Heart right ventricle (tissue), 16 donors: ENCODE measurements at regions of chr2 and their contacts with region 1.

Region 1: DNA sequence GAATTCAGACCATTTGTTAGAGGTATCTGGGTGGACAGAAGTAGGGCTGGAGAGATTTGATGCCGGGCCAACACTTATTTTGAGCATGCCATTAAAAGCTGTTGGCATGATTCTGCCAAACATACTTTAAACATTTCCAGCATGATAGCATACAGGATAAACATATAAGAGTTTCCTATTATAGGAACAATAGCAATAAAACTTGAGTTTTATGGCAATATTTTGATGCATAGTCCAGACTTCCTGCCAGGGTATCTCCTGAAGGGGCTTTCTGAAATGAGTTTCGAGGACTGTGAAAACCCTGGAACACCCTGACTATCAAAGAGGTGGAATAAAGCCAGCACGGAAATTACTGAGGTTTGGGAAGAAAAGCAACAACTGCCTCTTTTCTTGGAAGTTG is 1398.0 kb upstream of the NXPH2 start:
- DNase-seq: no peak
- ATAC-seq: peak in 4 of 8 donors; percentile 16 to 81 (median 54)
- H3K4me3 ChIP-seq: peak overlapping the region in 3 of 10 donors; percentile 4 to 35 (median 22)
- H3K27ac ChIP-seq: peak overlapping the region in 3 of 10 donors; percentile 53 to 75 (median 65)
- H3K4me1 ChIP-seq: no peaks in the 10 kb centered on the region
- H3K27me3 ChIP-seq: no peaks in the 10 kb centered on the region
- CTCF ChIP-seq: no peak

Region 2: GRCh38 chr2:139759000-139759505 is 419.2 kb before region 1 on chr2:
- intact Hi-C with region 1: no loop called
- DNase-seq: no peak
- ATAC-seq: no peak
- H3K4me3 ChIP-seq: no peak overlapping the region
- H3K27ac ChIP-seq: no peak overlapping the region
- H3K4me1 ChIP-seq: no peaks in the 10 kb centered on the region
- H3K27me3 ChIP-seq: no peaks in the 10 kb centered on the region
- CTCF ChIP-seq: no peak

Region 3: DNA sequence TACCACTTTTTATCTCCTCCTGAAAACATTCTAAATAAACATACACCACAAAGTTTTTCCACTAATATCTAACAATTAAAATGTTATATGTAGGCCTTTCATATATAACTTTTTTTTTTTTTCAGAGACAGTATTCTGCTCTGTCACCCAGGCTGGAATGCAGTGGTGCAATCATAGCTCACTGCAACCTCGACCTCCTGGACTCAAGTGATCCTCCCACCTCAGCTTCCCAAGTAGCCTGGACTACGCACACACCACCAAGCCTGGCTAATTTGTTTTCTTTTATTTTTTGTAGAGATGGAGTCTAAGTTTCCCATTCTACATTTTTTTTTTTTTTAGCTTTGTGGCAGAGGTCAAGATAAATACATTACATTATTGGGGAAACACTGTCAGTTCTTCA is 214.6 kb after region 1 on chr2:
- intact Hi-C with region 1: no loop called
- DNase-seq: no peak
- ATAC-seq: no peak
- H3K4me3 ChIP-seq: no peak overlapping the region
- H3K27ac ChIP-seq: no peak overlapping the region
- H3K4me1 ChIP-seq: no peaks in the 10 kb centered on the region
- H3K27me3 ChIP-seq: no peaks in the 10 kb centered on the region
- CTCF ChIP-seq: no peak

Region 4: GRCh38 chr2:140498360-140498759 is 320.1 kb after region 1 on chr2:
- intact Hi-C with region 1: loop called in 1 of 10 experiments (anchors 5 kb)
- DNase-seq: no peak
- ATAC-seq: no peak
- H3K4me3 ChIP-seq: no peak overlapping the region
- H3K27ac ChIP-seq: no peak overlapping the region
- H3K4me1 ChIP-seq: no peaks in the 10 kb centered on the region
- H3K27me3 ChIP-seq: no peaks in the 10 kb centered on the region
- CTCF ChIP-seq: no peak